ENCODE measurements at regions of chr12 and their contacts with region 1.

Region 1: DNA sequence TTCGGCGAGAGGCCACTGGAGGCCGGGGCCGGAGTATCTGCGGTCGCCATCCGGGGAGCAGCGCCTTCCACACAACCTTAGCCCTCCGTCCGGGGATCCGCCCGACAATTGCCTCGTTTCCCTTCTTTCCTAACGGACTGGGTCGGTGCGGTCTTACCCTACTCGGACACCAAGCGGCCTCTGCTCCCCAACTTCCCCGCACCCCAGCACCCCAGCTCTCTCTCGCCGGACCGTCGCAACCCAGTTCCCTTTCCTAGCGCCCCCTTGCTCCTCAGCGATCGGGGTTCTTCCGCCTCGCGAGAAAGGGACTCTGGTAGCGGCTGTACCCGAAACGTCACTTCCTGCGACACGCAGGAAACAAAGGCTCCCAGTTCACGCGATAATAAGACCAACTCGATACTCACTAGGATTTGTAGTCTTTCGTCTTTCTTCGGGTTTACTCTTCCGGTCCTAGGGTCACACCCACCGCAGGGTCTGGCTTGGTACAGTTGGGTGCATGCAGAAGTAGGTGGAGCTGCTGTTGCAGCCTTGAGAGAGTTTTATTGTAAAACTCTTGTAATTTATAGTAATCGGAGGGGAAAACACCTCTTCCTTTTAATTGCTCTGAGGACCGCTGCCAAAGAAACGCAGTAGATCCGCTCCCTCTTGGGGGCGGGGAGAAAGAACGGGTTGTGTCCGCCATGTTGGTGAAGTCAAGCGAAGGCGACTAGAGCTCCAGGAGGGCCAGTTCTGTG is at the start of gene ZFC3H1:
- DNase-seq: peak; percentile 93
- H3K4me3 Mint-ChIP-seq: peak within 1 kb of the TSS; percentile 93
- H3K27ac Mint-ChIP-seq: peak within 1 kb of the TSS; percentile 99
- H3K4me1 Mint-ChIP-seq: peaks cover 41% of the 10 kb centered on the region
- H3K27me3 Mint-ChIP-seq: no peaks in the 10 kb centered on the region
- total RNA-seq, gene ZFC3H1: 64.7 to 76.8 TPM

Region 2: DNA sequence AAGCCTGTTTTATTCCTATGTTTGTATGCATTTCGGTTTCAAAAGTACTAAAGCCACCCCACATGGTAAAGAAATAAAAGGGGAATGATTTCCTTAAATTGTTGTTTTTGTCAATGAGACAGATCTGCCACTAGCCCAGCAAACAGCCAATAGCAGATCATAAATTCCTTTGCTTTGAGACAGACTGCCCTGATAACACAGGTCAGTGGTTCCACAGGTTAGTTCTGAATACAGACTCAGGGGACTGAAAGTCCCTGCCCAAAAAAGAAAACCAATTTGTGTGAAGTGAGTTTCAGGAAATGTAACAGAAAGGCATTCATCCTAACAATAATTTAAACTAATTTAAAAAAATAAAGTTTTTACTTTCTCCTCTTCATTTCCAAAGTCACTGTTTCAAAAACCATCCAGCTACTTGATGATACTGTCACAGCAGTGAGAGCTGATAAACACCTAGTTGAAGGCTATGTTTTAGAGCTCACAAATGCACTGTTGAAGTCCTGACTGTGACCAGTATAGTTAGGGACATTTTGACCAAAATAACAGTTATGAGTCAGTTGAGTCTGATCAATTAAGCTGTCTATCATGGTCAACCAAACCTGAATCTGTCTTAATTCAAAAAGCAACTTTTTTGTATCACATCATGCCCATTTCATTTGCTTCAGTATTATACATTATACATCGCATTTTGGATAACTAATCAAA is 146.4 kb before region 1 on chr12:
- CTCF ChIA-PET with region 1: no interaction called
- POLR2A ChIA-PET with region 1: no interaction called
- DNase-seq: no peak
- H3K4me3 Mint-ChIP-seq: no peak overlapping the region
- H3K27ac Mint-ChIP-seq: no peak overlapping the region
- H3K4me1 Mint-ChIP-seq: no peaks in the 10 kb centered on the region
- H3K27me3 Mint-ChIP-seq: peaks cover 16% of the 10 kb centered on the region

Region 3: DNA sequence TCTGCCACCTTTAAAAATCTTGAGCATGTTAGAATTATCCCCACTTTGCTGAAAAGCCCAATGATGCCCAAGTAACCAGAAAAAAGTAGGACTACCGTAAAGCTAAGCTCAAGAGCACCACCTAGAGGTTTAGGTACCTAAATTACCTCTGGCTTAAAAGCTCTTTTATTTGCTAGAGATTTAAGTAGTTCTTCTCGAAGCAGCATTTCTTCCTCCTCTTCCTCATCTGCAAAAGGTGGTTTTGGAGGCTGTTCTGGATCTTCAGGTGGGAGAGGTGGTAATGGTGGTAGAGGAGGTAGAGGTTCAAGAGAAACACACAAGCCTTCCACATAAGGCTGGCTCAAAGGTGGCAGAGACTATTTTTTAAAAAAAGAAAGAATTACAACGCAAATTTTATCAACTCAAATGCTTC is 27.0 kb before region 1 on chr12:
- CTCF ChIA-PET with region 1: interaction called, 19 read pairs
- POLR2A ChIA-PET with region 1: interaction called, 29 read pairs
- DNase-seq: no peak
- H3K4me3 Mint-ChIP-seq: no peak overlapping the region
- H3K27ac Mint-ChIP-seq: no peak overlapping the region
- H3K4me1 Mint-ChIP-seq: peaks cover 14% of the 10 kb centered on the region
- H3K27me3 Mint-ChIP-seq: no peaks in the 10 kb centered on the region

Region 4: GRCh38 chr12:71652656-71653055 is 11.1 kb before region 1 on chr12:
- CTCF ChIA-PET with region 1: interaction called, 4 read pairs
- POLR2A ChIA-PET with region 1: interaction called, 36 read pairs
- DNase-seq: no peak
- H3K4me3 Mint-ChIP-seq: no peak overlapping the region
- H3K27ac Mint-ChIP-seq: no peak overlapping the region
- H3K4me1 Mint-ChIP-seq: peaks cover 32% of the 10 kb centered on the region
- H3K27me3 Mint-ChIP-seq: no peaks in the 10 kb centered on the region

Region 5: GRCh38 chr12:71746983-71747611 is 83.4 kb after region 1 on chr12:
- CTCF ChIA-PET with region 1: interaction called, 18 read pairs
- POLR2A ChIA-PET with region 1: interaction called, 18 read pairs
- DNase-seq: peak; percentile 48
- H3K4me3 Mint-ChIP-seq: no peak overlapping the region
- H3K27ac Mint-ChIP-seq: no peak overlapping the region
- H3K4me1 Mint-ChIP-seq: no peaks in the 10 kb centered on the region
- H3K27me3 Mint-ChIP-seq: peaks cover 48% of the 10 kb centered on the region

Region 6: DNA sequence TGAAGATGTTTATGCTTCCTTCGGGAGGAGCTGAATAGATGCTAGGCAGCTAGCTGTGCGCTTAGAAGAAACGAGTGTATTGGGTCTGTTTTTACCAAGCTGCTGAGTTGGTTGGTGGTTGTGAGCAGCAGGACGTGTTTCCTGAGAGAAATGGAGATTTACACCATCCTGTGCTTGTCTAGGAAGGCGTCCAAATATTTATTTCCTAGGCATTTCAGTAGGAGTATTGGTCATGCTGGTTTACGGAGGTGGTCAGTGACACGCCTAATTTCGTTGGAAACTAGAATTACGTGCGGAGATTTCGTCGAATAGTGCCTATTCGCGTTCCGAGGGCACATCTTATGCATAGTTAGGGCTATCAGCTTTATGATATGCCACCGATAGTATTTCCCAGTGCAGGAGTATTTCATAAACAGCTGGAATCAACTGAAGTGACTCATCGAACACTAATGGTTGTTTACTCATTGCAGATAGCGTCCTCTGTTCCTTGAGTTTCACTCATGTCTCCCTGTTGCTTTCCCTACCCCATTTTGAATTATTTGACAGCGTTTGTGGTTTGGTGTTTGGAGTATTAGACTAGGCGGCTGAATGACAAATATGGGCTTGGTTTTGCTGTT is 176.6 kb after region 1 on chr12:
- CTCF ChIA-PET with region 1: interaction called, 6 read pairs
- POLR2A ChIA-PET with region 1: interaction called, 48 read pairs
- DNase-seq: peak; percentile 22
- H3K4me3 Mint-ChIP-seq: peak overlapping the region; percentile 92
- H3K27ac Mint-ChIP-seq: peak overlapping the region; percentile 97
- H3K4me1 Mint-ChIP-seq: peaks cover 37% of the 10 kb centered on the region
- H3K27me3 Mint-ChIP-seq: no peaks in the 10 kb centered on the region